Transverse colon (tissue), 4 donors: ENCODE measurements at regions of chr19 and their contacts with region 1.

Region 1: GRCh38 chr19:48777720-48778119 is 22.4 kb downstream of the FGF21 start:
- DNase-seq: no peak
- H3K4me3 ChIP-seq: no peak overlapping the region
- H3K27ac ChIP-seq: no peak overlapping the region
- H3K4me1 ChIP-seq: peaks cover 0 to 15% (median 5%) of the 10 kb centered on the region in 4 donors
- H3K27me3 ChIP-seq: peaks cover 42% of the 10 kb centered on the region
- CTCF ChIP-seq: no peak
- EP300 ChIP-seq: no peak
- POLR2A ChIP-seq: no peak

Region 2: DNA sequence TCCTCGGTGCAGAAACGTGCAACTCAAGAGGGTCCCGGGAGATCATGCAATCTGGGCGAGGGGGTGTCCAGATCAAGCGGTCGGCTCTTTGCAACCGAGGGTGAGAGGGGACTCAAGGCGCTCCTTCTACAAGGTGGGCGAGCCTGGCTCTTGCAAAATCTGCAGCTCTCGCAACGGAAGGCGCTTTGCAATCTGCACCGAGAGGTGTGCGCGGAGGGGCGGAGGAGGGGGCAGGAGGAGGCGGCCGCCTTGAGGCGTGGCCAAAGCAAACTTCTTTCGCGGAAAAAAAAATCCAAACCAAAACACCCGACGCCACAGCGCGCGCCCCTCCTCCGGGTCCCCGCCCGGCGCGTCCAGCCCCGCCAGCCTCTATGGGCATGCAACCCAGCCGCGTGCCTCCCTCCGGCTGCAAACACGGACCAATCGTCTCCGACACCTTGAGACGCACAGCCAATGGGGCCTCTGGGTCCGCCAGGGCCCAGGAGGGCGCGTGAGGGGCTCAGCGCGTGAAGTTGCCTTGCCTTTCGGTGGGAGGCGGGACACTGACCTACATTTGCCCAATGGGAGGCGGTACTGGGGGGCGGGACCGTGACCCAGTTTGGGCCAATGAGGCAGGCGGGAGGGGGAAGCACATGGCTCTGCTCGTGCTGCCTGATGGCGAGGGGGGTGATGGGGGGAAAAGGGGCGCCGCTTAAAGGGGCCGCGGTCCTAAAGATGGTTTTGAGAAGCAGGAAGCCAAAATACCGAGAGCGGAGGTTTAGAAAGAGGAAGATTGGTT is 140.4 kb before region 1 on chr19 and contains the start of gene DBP:
- in situ Hi-C with region 1: no loop called
- intact Hi-C with region 1: no loop called
- DNase-seq: peak; percentile 99
- H3K4me3 ChIP-seq: peak within 1 kb of the TSS; percentile 70 to 85 (median 80)
- H3K27ac ChIP-seq: peak within 1 kb of the TSS; percentile 94 to 98 (median 97)
- H3K4me1 ChIP-seq: peaks cover 27 to 55% (median 42%) of the 10 kb centered on the region in 4 donors
- H3K27me3 ChIP-seq: no peaks in the 10 kb centered on the region
- CTCF ChIP-seq: no peak
- EP300 ChIP-seq: no peak
- POLR2A ChIP-seq: peak; percentile 80
- total RNA-seq, gene DBP: 8.7 to 13.8 (median 11.6) TPM

Region 3: DNA sequence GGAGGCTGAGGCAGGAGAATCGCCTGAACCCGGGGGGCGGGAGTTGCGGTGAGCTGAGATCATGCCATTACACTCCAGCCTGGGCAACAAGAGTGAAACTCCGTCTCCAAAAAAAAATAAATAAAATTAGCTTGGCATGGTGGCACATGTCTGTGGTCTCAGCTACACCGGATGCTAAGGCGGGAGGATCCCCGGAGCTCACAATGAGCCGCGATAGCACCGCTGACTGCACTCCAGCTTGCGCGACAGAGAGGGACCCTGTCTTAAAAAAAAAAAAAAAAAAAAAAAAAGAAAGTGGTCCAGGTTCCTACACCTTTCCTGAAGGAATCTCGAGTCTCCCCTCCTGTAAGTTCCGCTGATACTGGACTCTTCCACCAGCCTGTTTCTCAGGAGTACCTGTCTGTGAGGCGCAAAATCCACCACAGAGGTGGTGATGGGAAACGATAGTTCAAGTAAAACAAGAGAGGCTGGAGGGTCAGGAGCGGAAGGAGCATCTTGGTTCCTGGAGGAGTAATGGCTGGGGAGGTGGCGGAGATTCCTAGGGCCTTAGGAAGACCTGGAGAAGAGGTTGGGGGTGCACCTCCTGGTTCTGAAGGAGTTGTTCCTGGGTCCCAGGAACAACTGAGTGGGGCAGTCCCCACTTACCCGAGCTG is 25.7 kb before region 1 on chr19:
- in situ Hi-C with region 1: no loop called
- intact Hi-C with region 1: loop called (anchors 1 kb)
- DNase-seq: no peak
- H3K4me3 ChIP-seq: peak overlapping the region in 3 of 4 donors; percentile 7 to 42 (median 22)
- H3K27ac ChIP-seq: peak overlapping the region; percentile 4 to 50 (median 24)
- H3K4me1 ChIP-seq: peaks cover 12 to 19% (median 14%) of the 10 kb centered on the region in 4 donors
- H3K27me3 ChIP-seq: peaks cover 73% of the 10 kb centered on the region
- CTCF ChIP-seq: no peak
- EP300 ChIP-seq: no peak
- POLR2A ChIP-seq: no peak